Activated CD4-positive, alpha-beta memory T cell treated with anti-CD3 and anti-CD28 coated beads, Interleukin-2, amount 10 ng/mL, durations not matched to agents 7 days and 5 days (primary cell): ENCODE measurements at regions of chr13 and their contacts with region 1.

Region 1: DNA sequence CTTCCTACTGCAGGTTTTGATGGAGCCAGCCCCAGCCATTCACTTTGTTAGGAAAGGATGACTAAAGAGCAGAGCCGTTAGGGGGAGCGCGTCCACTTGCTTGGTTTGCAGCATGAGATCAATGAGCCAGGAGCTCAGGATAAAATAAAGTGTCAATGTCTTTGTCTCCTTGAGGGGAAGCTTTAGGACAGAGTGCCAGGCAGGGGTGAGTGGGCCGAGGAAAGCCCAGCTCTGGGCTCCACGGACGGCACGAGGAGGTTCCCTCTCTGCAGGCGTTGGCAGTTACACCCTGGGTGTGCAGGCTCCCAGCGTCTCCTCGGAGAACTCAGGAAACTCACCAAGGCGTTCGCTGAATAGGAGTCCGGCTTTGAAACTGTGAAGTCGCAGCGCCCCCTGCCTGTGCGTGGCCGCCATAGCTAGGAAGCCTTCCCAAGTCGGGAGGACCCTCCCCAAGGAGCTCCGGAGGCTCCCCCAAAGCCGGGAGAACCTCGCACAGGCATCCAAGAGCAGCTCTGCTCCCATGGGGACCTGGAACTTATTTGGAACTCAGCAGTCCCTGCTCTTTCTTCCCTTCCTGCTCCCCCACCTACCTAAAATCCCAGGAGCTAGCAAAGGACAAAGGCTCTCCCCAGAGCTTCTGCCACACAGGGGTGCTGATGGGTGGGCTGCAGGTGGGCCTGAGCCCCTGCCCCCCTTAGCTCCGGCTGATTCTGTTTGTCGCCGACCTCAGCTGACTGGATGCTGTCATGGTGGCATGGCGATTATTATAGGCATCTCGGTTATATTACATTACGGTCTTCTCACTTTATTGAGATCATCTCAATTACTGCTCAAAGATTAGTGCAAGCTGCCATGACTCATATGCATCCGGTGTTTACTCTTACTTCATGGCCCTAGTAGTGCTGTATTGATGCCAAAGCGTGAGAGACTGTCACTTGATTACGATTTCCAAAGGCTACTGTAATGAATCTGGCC is 34.4 kb downstream of the GSX1 start:
- DNase-seq: peak; percentile 70
- H3K4me3 Mint-ChIP-seq: no peak overlapping the region
- H3K27ac Mint-ChIP-seq: no peak overlapping the region
- H3K4me1 Mint-ChIP-seq: peaks cover 11% of the 10 kb centered on the region
- H3K27me3 Mint-ChIP-seq: peaks cover 65% of the 10 kb centered on the region

Region 2: GRCh38 chr13:27362064-27362883 is 464.4 kb before region 1 on chr13:
- CTCF ChIA-PET with region 1: interaction called, 96 read pairs
- POLR2A ChIA-PET with region 1: no interaction called
- DNase-seq: peak; percentile 81
- H3K4me3 Mint-ChIP-seq: no peak overlapping the region
- H3K27ac Mint-ChIP-seq: no peak overlapping the region
- H3K4me1 Mint-ChIP-seq: peaks cover 5% of the 10 kb centered on the region
- H3K27me3 Mint-ChIP-seq: peaks cover 37% of the 10 kb centered on the region

Region 3: GRCh38 chr13:27374650-27375049 is 452.0 kb before region 1 on chr13:
- CTCF ChIA-PET with region 1: interaction called, 132 read pairs
- POLR2A ChIA-PET with region 1: no interaction called
- DNase-seq: peak; percentile 63
- H3K4me3 Mint-ChIP-seq: no peak overlapping the region
- H3K27ac Mint-ChIP-seq: no peak overlapping the region
- H3K4me1 Mint-ChIP-seq: peaks cover 8% of the 10 kb centered on the region
- H3K27me3 Mint-ChIP-seq: peaks cover 19% of the 10 kb centered on the region

Region 4: GRCh38 chr13:27533155-27533643 is 293.5 kb before region 1 on chr13:
- CTCF ChIA-PET with region 1: interaction called, 27 read pairs
- POLR2A ChIA-PET with region 1: no interaction called
- DNase-seq: peak; percentile 46
- H3K4me3 Mint-ChIP-seq: no peak overlapping the region
- H3K27ac Mint-ChIP-seq: no peak overlapping the region
- H3K4me1 Mint-ChIP-seq: no peaks in the 10 kb centered on the region
- H3K27me3 Mint-ChIP-seq: no peaks in the 10 kb centered on the region

Region 5: GRCh38 chr13:27770809-27771208 is 55.9 kb before region 1 on chr13:
- CTCF ChIA-PET with region 1: interaction called, 18 read pairs
- POLR2A ChIA-PET with region 1: no interaction called
- DNase-seq: no peak
- H3K4me3 Mint-ChIP-seq: no peak overlapping the region
- H3K27ac Mint-ChIP-seq: no peak overlapping the region
- H3K4me1 Mint-ChIP-seq: no peaks in the 10 kb centered on the region
- H3K27me3 Mint-ChIP-seq: peaks cover 16% of the 10 kb centered on the region

Region 6: DNA sequence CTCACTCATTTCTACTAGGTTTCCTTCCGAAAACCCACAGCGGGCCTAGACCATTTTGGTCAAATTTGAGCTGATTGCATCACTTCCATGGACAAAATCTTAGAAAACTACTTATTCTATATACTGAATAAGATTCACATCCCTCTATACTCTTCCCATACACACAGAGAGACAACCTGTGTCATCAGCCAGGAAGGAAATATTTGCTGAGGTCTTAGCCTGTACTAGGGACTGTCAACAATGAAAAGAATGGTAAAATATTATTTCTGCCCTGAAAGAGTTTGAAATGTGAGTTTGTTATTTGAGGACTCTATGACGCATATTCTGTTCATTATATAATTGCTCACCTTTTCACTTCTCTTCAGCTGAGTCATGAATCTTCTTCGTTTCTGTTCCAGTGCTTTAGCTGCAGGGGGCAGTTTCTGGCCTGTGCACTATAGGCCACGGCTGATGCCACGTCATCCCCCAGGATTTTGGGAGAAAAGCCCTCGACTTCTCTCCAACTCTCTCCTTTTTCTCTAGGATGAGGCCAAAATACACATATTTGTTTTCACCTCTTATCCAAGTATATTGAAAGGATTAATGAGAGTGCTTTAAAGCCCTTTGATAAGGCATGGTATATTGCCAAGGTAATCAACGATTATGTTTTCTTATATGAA is 13.3 kb after region 1 on chr13:
- CTCF ChIA-PET with region 1: interaction called, 35 read pairs
- POLR2A ChIA-PET with region 1: no interaction called
- DNase-seq: no peak
- H3K4me3 Mint-ChIP-seq: no peak overlapping the region
- H3K27ac Mint-ChIP-seq: no peak overlapping the region
- H3K4me1 Mint-ChIP-seq: no peaks in the 10 kb centered on the region
- H3K27me3 Mint-ChIP-seq: peaks cover 29% of the 10 kb centered on the region

Region 7: GRCh38 chr13:27878274-27878673 is 51.6 kb after region 1 on chr13:
- CTCF ChIA-PET with region 1: no interaction called
- POLR2A ChIA-PET with region 1: no interaction called
- DNase-seq: no peak
- H3K4me3 Mint-ChIP-seq: no peak overlapping the region
- H3K27ac Mint-ChIP-seq: no peak overlapping the region
- H3K4me1 Mint-ChIP-seq: no peaks in the 10 kb centered on the region
- H3K27me3 Mint-ChIP-seq: peaks cover 43% of the 10 kb centered on the region

Region 8: GRCh38 chr13:27980280-27980998 is 153.8 kb after region 1 on chr13:
- CTCF ChIA-PET with region 1: interaction called, 109 read pairs
- POLR2A ChIA-PET with region 1: interaction called, 3 read pairs
- DNase-seq: no peak
- H3K4me3 Mint-ChIP-seq: no peak overlapping the region
- H3K27ac Mint-ChIP-seq: no peak overlapping the region
- H3K4me1 Mint-ChIP-seq: peaks cover 17% of the 10 kb centered on the region
- H3K27me3 Mint-ChIP-seq: peaks cover 70% of the 10 kb centered on the region